ENCODE measurements at regions of chr7 and their contacts with region 1.

Region 1: GRCh38 chr7:82729172-82730030 is 285.8 kb upstream of the CACNA2D1 start:
- DNase-seq: peak in 1 of 2 experiments; percentile 41
- H3K4me3 ChIP-seq: peak overlapping the region; percentile 31; the same call in 1 of the 2 replicates
- H3K27ac ChIP-seq: no peak overlapping the region
- H3K4me1 ChIP-seq: no peaks in the 10 kb centered on the region
- H3K27me3 ChIP-seq: no peaks in the 10 kb centered on the region
- CTCF ChIP-seq: peak; percentile 89

Region 2: DNA sequence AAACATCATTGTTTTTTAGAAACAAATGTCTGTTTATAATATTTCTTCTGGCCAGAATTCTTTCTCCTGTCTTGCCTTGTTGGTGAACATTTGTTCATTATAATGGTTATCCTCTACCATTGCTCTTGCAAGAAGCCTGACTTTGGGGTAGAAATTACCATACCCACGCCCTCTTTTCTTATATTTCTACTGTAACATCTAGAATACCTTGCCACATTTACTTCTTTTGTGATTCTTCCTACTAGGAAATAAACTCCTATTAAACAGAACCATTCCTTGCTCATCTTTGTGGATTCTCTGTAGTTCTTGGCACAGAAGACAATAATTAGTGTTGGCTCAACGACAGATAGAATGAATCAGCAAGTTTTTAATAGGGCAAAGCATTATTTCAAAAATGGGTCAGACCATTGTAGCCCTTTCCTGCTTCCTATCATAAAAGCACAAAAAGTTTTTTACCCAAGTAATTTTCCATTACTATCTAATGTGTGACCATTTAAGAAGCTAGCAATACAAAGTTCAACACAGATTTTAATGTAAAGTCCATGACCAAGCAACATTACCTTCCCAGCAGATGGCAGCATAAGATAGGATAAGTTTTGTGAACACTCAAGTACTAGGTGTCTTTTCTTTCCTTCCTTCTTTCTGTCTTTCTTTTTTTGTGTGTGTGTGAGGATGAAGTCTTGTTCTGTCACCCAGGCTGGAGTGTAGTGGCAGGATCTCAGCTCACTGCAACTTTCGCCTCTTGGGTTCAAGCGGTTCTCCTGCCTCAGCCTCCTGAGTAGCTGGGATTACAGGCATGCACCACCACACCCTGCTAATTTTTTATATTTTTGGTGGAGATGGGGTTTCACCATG is 1229.9 kb before region 1 on chr7:
- CTCF ChIA-PET with region 1: interaction called, 5 read pairs
- POLR2A ChIA-PET with region 1: no interaction called
- intact Hi-C with region 1: loop called (anchors 1 kb)
- DNase-seq: peak; percentile 19 to 53
- H3K4me3 ChIP-seq: no peak overlapping the region
- H3K27ac ChIP-seq: peak overlapping the region; percentile 26
- H3K4me1 ChIP-seq: peaks cover 10% of the 10 kb centered on the region
- H3K27me3 ChIP-seq: no peaks in the 10 kb centered on the region
- CTCF ChIP-seq: peak; percentile 82

Region 3: GRCh38 chr7:82234457-82235049 is 494.8 kb before region 1 on chr7:
- CTCF ChIA-PET with region 1: interaction called, 9 read pairs
- POLR2A ChIA-PET with region 1: no interaction called
- intact Hi-C with region 1: loop called (anchors 5 kb)
- DNase-seq: no peak
- H3K4me3 ChIP-seq: no peak overlapping the region
- H3K27ac ChIP-seq: no peak overlapping the region
- H3K4me1 ChIP-seq: no peaks in the 10 kb centered on the region
- H3K27me3 ChIP-seq: no peaks in the 10 kb centered on the region
- CTCF ChIP-seq: peak; percentile 78

Region 4: DNA sequence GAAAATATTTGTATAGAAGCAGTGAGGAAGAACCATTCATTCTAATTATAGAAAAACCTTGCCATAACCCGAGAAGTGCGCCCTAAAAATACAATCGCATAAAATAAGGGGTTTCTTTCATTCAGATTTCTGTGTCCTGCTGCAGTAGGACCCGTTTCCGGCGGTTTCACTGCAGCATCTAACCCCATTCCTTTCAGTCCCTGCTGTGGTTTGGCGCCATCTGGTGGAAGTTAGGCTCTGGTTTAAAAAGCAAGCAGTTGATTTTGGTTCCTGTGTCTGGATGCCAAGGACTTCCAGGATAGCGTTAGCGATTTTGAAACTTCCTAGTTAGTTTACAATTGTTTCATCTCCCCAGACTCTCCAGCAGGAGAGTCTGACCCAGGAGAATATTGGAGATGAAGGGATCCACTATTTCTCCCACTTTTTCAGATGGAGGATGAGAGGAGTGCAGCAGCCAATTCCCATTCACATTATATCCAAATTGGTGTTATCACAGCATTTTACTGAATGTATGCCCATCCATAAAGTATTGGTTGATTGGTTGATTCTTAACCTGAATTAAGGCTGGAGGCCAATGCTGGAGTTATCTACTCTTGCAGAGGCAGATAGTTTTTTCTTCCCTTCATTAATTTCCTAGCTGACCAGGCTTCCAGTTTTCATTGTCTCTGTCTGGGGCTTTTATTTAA is 157.1 kb before region 1 on chr7:
- CTCF ChIA-PET with region 1: no interaction called
- POLR2A ChIA-PET with region 1: no interaction called
- intact Hi-C with region 1: loop called (anchors 1 kb)
- DNase-seq: peak; percentile 56 to 80
- H3K4me3 ChIP-seq: no peak overlapping the region
- H3K27ac ChIP-seq: no peak overlapping the region
- H3K4me1 ChIP-seq: no peaks in the 10 kb centered on the region
- H3K27me3 ChIP-seq: no peaks in the 10 kb centered on the region
- CTCF ChIP-seq: peak; percentile 92

Region 5: GRCh38 chr7:82625377-82625776 is 104.0 kb before region 1 on chr7:
- CTCF ChIA-PET with region 1: no interaction called
- POLR2A ChIA-PET with region 1: no interaction called
- intact Hi-C with region 1: loop called (anchors 5 kb)
- DNase-seq: no peak
- H3K4me3 ChIP-seq: no peak overlapping the region
- H3K27ac ChIP-seq: no peak overlapping the region
- H3K4me1 ChIP-seq: no peaks in the 10 kb centered on the region
- H3K27me3 ChIP-seq: no peaks in the 10 kb centered on the region
- CTCF ChIP-seq: no peak